ENCODE measurements at regions of chr6 and their contacts with region 1.

Region 1: DNA sequence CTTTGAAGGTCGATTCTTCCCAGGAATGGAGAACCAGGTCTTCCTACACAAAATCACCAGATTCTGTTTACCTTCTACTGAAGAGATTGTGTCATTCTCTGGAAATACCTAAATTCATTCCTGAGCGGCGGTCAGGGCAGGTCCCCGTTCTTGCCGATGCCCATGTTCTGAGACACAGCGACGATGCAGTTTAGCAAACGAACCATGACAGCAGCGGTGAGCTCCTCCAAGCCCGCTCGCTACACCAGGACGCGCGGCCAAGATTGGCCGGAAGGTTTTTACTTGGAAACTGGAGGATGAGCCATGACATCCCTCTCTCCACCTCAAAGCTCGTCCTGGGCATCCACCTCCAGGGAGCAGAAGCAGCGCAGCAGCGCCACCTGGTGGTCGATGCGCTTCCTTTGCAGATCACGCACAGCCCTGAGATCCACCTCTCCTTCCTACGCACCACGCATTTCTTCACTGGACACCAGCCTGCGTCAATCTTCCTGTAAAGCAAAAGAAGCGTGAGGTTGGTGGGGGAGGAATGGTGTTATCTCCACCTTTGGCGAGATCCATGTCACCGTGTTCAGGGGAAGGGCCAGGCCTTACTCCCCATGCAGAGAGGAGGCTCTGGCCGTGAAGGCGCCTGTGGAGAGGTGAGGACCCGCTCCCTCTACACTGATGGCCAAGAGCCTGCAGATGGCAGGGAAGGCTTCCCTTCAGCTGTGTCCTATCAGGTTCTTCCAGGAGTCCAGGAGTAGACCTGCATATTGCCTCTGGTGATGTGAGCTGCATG is 9.9 kb upstream of the HLA-B start:
- DNase-seq: peak; percentile 90
- H3K4me3 Mint-ChIP-seq: peak overlapping the region; percentile 36
- H3K27ac Mint-ChIP-seq: no peak overlapping the region
- H3K4me1 Mint-ChIP-seq: no peaks in the 10 kb centered on the region
- H3K27me3 Mint-ChIP-seq: peaks cover 93% of the 10 kb centered on the region
- CTCF ChIP-seq: peak; percentile 80

Region 2: DNA sequence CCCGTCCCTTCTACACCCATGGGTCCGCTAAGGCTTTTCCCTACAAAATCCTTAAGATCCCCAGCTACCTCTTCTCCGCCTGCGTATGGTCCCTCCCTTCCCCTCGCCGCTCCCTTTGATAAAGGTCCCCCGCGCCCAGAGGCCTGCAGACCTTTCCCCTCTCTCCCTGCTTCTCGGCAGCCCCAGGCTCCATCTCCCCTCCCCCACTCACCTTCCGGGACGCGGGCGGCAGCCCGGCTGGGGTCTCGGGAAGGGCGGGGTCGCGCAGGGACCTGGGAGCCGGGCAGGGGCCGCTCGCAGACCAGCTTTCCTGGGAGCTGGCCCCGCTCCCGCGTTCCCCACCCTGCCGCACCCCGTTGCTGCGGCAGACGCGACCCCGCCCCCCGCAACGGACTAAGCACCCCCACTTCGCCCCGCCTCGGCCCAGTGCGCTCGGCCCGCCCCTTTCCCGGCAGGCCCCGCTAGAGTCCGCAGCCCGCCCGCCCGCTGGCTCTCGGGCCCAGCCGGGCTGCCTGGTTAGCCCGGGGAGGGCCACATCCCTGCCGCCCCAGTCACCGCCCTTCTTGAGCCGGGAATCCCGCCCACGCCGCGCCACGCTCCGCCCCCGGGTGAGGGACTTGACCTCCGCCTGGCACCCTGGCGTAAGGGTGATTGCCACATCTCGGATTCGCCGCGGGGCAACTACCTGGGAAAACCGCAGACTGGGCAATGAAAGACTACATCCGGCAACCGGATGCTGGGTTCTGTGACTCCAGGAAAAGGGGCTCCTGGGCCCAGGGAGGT is 624.4 kb before region 1 on chr6 and contains the start of gene FLOT1:
- CTCF ChIA-PET with region 1: no interaction called
- POLR2A ChIA-PET with region 1: no interaction called
- intact Hi-C with region 1: no loop called
- DNase-seq: peak; percentile 99
- H3K4me3 Mint-ChIP-seq: peak within 1 kb of the TSS; percentile 91
- H3K27ac Mint-ChIP-seq: peak within 1 kb of the TSS; percentile 90
- H3K4me1 Mint-ChIP-seq: peaks cover 38% of the 10 kb centered on the region
- H3K27me3 Mint-ChIP-seq: no peaks in the 10 kb centered on the region
- CTCF ChIP-seq: no peak
- total RNA-seq, gene FLOT1: 61.8 and 73.7 TPM in 2 replicates

Region 3: DNA sequence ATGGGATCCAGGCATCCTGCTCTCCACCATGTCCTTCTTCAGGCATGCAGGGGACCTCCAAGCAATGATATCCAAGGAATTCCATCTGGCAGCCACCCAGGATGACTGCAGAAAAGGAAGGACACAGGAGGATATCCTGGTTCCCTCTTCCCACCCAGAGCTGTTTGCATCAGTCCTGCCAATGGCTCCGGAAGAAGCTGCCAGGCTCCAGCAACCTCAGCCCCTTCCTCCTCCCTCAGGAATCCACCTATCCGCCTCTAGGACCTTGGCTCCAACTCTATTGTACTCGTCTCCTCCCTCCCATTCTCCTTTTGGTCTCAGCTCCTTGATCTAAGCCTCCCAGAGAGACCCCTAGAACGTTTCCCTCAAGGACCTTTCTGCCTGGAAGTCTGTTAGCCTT is 227.3 kb before region 1 on chr6:
- CTCF ChIA-PET with region 1: interaction called, 24 read pairs
- POLR2A ChIA-PET with region 1: interaction called, 5 read pairs
- intact Hi-C with region 1: loop called (anchors 1 kb)
- DNase-seq: no peak
- H3K4me3 Mint-ChIP-seq: no peak overlapping the region
- H3K27ac Mint-ChIP-seq: no peak overlapping the region
- H3K4me1 Mint-ChIP-seq: peaks cover 15% of the 10 kb centered on the region
- H3K27me3 Mint-ChIP-seq: no peaks in the 10 kb centered on the region
- CTCF ChIP-seq: no peak

Region 4: GRCh38 chr6:31197559-31198305 is 169.2 kb before region 1 on chr6:
- CTCF ChIA-PET with region 1: interaction called, 23 read pairs
- POLR2A ChIA-PET with region 1: interaction called, 27 read pairs
- intact Hi-C with region 1: loop called (anchors 1 kb)
- DNase-seq: peak; percentile 91
- H3K4me3 Mint-ChIP-seq: peak overlapping the region; percentile 86
- H3K27ac Mint-ChIP-seq: peak overlapping the region; percentile 95
- H3K4me1 Mint-ChIP-seq: peaks cover 10% of the 10 kb centered on the region
- H3K27me3 Mint-ChIP-seq: no peaks in the 10 kb centered on the region
- CTCF ChIP-seq: no peak

Region 5: GRCh38 chr6:31285486-31285885 is 81.4 kb before region 1 on chr6:
- CTCF ChIA-PET with region 1: no interaction called
- POLR2A ChIA-PET with region 1: no interaction called
- intact Hi-C with region 1: no loop called
- DNase-seq: no peak
- H3K4me3 Mint-ChIP-seq: no peak overlapping the region
- H3K27ac Mint-ChIP-seq: no peak overlapping the region
- H3K4me1 Mint-ChIP-seq: no peaks in the 10 kb centered on the region
- H3K27me3 Mint-ChIP-seq: peaks cover 35% of the 10 kb centered on the region
- CTCF ChIP-seq: no peak

Region 6: GRCh38 chr6:31377029-31377428 is 10.1 kb after region 1 on chr6:
- CTCF ChIA-PET with region 1: interaction called, 16 read pairs
- POLR2A ChIA-PET with region 1: no interaction called
- intact Hi-C with region 1: no loop called
- DNase-seq: no peak
- H3K4me3 Mint-ChIP-seq: no peak overlapping the region
- H3K27ac Mint-ChIP-seq: no peak overlapping the region
- H3K4me1 Mint-ChIP-seq: no peaks in the 10 kb centered on the region
- H3K27me3 Mint-ChIP-seq: peaks cover 49% of the 10 kb centered on the region
- CTCF ChIP-seq: no peak

Region 7: GRCh38 chr6:31525932-31526591 is 159.2 kb after region 1 on chr6:
- CTCF ChIA-PET with region 1: no interaction called
- POLR2A ChIA-PET with region 1: no interaction called
- intact Hi-C with region 1: no loop called
- DNase-seq: no peak
- H3K4me3 Mint-ChIP-seq: no peak overlapping the region
- H3K27ac Mint-ChIP-seq: no peak overlapping the region
- H3K4me1 Mint-ChIP-seq: no peaks in the 10 kb centered on the region
- H3K27me3 Mint-ChIP-seq: peaks cover 8% of the 10 kb centered on the region
- CTCF ChIP-seq: no peak

Measured in MCF 10A (cell line).